GM13976 (cell line): ENCODE measurements at regions of chr2 and their contacts with region 1.

Region 1: GRCh38 chr2:37890893-37891495 is 34.1 kb upstream of the RMDN2 start:
- DNase-seq: peak; percentile 65
- CTCF ChIP-seq: peak; percentile 79

Region 2: GRCh38 chr2:37156857-37157714 is 733.9 kb before region 1 on chr2 and contains the start of gene EIF2AK2:
- in situ Hi-C with region 1: loop called (anchors 25 kb)
- DNase-seq: peak; percentile 98
- CTCF ChIP-seq: no peak

Region 3: DNA sequence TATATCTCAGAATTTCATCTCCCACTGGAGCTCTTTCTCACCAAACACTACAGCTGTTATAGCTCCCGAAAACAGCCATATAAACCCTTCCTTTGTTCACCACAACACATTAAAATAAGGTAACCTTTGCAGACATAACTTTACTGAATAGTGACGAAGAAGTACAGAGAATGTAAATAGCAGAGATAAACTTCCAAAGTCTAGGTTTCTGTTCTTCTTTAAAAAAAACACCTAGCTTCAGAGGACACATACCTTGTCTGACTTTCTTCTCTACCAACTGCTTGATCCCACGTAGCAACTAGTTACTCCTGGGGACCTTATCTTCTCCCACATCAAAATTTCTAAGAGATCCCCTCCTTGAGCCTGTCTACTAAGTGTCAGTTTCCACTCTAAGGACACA is 453.8 kb after region 1 on chr2:
- in situ Hi-C with region 1: no loop called
- DNase-seq: no peak
- CTCF ChIP-seq: no peak

Region 4: DNA sequence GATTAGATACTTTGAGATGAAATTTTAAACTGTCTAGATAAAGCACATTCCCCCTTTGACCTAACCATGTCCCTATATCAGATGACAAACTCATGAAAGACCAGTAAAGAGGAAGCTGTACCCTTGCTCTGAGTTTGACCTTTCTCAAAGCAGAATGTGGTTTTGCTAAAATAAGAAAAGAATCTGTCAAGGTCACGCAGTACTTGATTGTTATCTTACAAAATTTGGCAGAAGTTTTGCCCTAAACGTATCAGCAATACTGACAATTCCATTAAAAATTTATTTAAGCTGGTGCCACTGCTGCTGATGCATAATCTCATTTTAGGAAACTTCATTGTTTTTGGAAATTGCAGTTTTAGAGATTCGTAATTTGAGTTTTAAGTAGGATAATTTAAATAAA is 743.7 kb after region 1 on chr2:
- in situ Hi-C with region 1: no loop called
- DNase-seq: peak; percentile 76
- CTCF ChIP-seq: no peak